T-cell (primary cell): ENCODE measurements at regions of chr1 and their contacts with region 1.

Region 1: DNA sequence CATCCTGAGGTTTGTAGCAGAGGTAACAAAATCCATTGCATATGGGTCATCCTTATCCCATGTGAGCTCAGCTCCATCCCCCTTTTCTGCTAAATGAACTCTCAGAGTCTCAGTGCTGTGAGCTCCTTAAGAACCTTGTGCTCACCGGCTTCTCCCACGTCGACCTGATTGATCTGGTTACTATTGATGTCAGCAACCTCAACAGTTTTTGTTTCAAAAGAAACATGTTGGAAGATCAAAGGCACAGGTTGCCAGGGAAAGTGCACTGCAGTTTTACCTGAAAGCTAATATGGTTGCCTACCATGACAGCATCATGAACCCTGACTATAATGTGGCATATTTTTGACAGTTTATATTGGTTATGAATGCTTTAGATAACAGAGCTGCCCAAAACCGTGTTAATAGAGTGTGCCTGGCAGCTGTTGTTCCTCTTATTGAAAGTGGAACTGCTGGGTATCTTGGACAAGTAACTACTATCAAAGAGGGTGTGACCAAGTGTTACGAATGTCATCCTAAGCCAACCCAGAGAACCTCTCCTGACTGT is 131.4 kb downstream of the HS2ST1 start:
- DNase-seq: peak in 33 of 35 experiments; percentile 15 to 82 (median 62)
- ATAC-seq: peak; percentile 52 to 76 (median 62)
- H3K4me3 ChIP-seq: no peak overlapping the region
- H3K4me3 Mint-ChIP-seq: peak overlapping the region in 1 of 3 donors; percentile 70
- H3K27ac ChIP-seq: no peak overlapping the region
- H3K27ac Mint-ChIP-seq: peak overlapping the region; percentile 19 to 66
- H3K4me1 ChIP-seq: peaks cover 10 to 25% of the 10 kb centered on the region in 2 experiments
- H3K4me1 Mint-ChIP-seq: peaks cover 48 to 52% (median 52%) of the 10 kb centered on the region in 3 donors
- H3K27me3 ChIP-seq: no peaks in the 10 kb centered on the region
- H3K27me3 Mint-ChIP-seq: no peaks in the 10 kb centered on the region

Region 2: DNA sequence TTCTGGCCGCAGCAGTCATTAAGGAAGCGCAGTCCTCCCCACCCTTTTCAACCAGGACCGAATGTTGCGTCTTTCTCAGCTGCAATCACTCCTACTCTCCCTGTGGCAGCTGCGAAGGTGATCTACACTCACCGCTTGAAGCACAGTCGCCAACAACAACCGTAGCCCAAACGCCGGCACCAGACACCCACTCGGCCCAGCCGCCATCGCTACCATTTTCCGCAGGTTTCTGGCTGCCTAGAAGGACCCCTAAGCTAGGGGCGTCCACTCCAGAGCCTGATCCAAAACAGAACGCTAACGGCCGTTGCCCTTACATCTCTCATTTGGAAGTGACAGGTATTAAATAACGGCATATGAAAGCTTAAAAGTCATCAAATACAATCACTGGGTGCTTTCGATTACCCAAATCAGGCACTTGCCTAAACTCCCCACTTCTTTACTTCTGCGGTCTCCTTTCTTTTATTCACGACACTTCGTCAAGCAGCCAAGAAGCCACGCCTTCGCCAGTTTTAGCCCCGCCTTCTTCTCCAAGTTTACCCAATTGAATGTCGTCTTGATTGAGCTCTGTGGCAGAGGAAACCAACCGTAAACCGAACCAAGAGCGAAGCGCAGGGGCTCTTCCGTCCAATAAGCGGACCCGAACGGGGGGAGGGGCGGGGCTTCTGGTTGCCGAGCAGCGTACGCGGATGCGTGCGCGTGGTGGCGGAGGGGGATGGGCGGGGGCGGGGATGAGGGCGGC is 131.8 kb before region 1 on chr1 and contains the start of gene SELENOF:
- CTCF ChIA-PET with region 1: interaction called in 1 of 2 experiments, 9 read pairs
- POLR2A ChIA-PET with region 1: interaction called in 1 of 2 experiments, 35 read pairs
- DNase-seq: peak; percentile 97 to 100 (median 99)
- ATAC-seq: peak; percentile 88 to 90 (median 90)
- H3K4me3 ChIP-seq: peak within 1 kb of the TSS; percentile 90 to 100
- H3K4me3 Mint-ChIP-seq: no peak within 1 kb of the TSS
- H3K27ac ChIP-seq: peak within 1 kb of the TSS; percentile 92
- H3K27ac Mint-ChIP-seq: no peak within 1 kb of the TSS
- H3K4me1 ChIP-seq: peaks cover 17 to 22% of the 10 kb centered on the region in 2 experiments
- H3K4me1 Mint-ChIP-seq: peaks cover 5 to 54% (median 52%) of the 10 kb centered on the region in 3 donors
- H3K27me3 ChIP-seq: no peaks in the 10 kb centered on the region
- H3K27me3 Mint-ChIP-seq: no peaks in the 10 kb centered on the region
- total RNA-seq, gene SELENOF: 141 to 165 (median 145) TPM

Region 3: GRCh38 chr1:86972262-86972661 is 73.6 kb before region 1 on chr1:
- CTCF ChIA-PET with region 1: interaction called in 1 of 2 experiments, 10 read pairs
- POLR2A ChIA-PET with region 1: interaction called in 1 of 2 experiments, 3 read pairs
- DNase-seq: no peak
- ATAC-seq: no peak
- H3K4me3 ChIP-seq: no peak overlapping the region
- H3K4me3 Mint-ChIP-seq: no peak overlapping the region
- H3K27ac ChIP-seq: no peak overlapping the region
- H3K27ac Mint-ChIP-seq: no peak overlapping the region
- H3K4me1 ChIP-seq: no peaks in the 10 kb centered on the region
- H3K4me1 Mint-ChIP-seq: peaks cover 15 to 26% (median 21%) of the 10 kb centered on the region in 3 donors
- H3K27me3 ChIP-seq: peaks cover 0 to 2% of the 10 kb centered on the region in 2 experiments
- H3K27me3 Mint-ChIP-seq: no peaks in the 10 kb centered on the region

Region 4: DNA sequence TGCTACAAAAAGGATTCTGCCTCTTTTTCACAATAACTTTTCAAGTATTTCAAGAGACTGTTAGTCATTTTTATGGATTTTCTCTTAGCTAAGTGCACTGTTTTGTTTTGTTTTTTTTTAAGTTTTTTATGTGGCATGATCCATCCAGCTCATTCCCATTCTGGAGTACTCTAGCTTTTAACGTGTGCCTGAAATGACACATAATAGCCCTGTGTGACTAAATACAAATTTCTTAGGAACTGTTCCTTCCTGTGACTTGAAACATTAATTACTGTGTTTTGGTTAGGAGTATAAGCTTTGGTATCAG is 12.5 kb after region 1 on chr1:
- CTCF ChIA-PET with region 1: no interaction called
- POLR2A ChIA-PET with region 1: no interaction called
- DNase-seq: no peak
- ATAC-seq: no peak
- H3K4me3 ChIP-seq: no peak overlapping the region
- H3K4me3 Mint-ChIP-seq: no peak overlapping the region
- H3K27ac ChIP-seq: no peak overlapping the region
- H3K27ac Mint-ChIP-seq: no peak overlapping the region
- H3K4me1 ChIP-seq: no peaks in the 10 kb centered on the region
- H3K4me1 Mint-ChIP-seq: peaks cover 32 to 42% (median 33%) of the 10 kb centered on the region in 3 donors
- H3K27me3 ChIP-seq: no peaks in the 10 kb centered on the region
- H3K27me3 Mint-ChIP-seq: no peaks in the 10 kb centered on the region

Region 5: DNA sequence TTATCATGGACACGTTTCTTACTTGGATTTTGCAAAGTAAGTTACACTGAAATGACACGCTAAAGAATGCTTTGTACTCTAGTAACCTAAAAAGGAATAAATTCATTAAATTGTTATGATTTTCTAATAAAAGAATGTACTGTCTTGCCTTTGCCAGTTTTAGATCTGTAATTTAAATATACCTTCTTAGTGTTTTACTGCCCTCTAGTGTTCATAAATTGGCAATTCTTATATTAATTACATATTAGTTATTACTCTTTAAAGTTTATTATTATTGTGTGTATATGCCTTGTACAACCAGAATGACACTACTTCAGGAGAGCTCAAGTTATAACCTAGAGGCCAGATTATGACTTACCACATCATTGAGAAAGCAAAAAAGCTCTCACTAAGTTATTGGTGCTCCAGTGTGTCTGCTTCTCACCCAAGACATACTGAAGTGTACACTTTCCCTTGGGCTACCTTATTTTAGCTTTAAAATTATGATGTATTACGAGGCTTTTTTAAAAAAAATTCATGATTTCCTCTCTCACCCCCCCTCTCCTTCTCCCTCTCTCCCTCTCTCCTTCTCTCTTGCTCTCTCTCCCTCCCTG is 38.5 kb after region 1 on chr1:
- CTCF ChIA-PET with region 1: interaction called, 4 to 16 read pairs
- POLR2A ChIA-PET with region 1: no interaction called
- DNase-seq: peak in 1 of 35 experiments; percentile 59
- ATAC-seq: peak in 1 of 4 experiments; percentile 36
- H3K4me3 ChIP-seq: no peak overlapping the region
- H3K4me3 Mint-ChIP-seq: no peak overlapping the region
- H3K27ac ChIP-seq: no peak overlapping the region
- H3K27ac Mint-ChIP-seq: no peak overlapping the region
- H3K4me1 ChIP-seq: no peaks in the 10 kb centered on the region
- H3K4me1 Mint-ChIP-seq: peaks cover 2 to 7% (median 5%) of the 10 kb centered on the region in 3 donors
- H3K27me3 ChIP-seq: no peaks in the 10 kb centered on the region
- H3K27me3 Mint-ChIP-seq: no peaks in the 10 kb centered on the region